ENCODE measurements at regions of chr2 and their contacts with region 1.

Region 1: DNA sequence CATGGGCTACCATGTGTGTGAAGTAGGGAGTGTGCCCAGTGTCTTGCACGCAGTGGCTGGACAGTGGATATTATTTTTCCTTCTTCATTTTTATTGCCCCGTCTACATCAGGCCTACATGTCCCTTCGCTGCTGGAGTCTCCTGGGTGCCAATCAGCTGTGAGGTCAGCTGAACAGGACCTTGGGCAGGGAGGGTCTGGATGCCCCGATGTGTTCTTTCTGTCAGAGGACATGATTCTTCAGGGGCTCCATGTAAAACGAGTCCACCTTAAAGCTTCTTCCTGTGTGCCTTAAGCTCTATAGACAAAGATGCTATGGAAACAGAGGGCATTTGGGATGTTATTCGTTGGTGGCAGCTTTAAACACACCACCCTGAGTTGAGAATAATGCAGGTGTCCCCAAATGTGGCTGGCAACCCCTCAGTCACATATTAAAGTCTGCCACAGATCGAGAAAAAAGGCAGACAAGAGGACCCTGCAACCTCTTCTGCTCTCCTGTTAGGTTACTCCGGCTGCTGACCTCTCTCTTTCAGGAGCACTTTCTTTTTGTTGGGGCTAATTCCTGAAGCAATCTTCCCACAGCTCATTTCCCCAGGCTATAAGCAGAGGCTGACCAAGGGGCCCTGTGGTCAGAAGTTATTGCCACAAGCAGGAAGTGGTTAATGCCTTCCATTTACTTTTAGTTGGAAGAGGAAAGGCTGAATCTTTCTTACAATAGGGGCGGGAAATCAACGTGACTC is 20.0 kb downstream of the GREB1 start:
- DNase-seq: peak; percentile 44
- H3K4me3 ChIP-seq: no peak overlapping the region
- H3K27ac ChIP-seq: no peak overlapping the region
- H3K4me1 ChIP-seq: no peaks in the 10 kb centered on the region
- H3K27me3 ChIP-seq: peaks cover 6% of the 10 kb centered on the region
- CTCF ChIP-seq: no peak

Region 2: DNA sequence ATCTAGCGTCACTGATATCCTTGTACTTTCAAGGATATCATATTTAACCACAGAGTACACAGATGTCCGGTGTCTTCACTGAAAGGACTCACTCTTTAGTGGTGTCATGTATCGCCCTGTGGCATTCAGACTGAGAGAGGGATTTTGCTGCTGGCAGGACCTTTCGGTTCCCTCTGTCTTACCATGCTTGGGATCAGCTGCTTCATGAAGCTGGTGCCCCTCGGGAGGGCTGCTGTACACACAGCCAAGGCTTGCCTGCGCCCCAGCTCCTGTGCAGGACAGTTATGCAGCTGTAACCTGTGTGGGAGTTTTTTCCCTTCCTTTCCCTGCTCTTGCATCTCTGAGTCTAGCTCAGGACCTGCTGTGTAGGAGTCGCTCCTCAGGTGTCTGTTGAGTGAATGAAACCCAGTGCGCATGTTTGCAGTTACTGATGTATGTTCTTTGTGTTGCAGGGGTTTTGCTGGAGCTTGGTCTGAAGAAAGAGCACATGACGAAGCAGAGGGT is 44.5 kb after region 1 on chr2:
- CTCF ChIA-PET with region 1: no interaction called
- dilution Hi-C with region 1: loop called (anchors 5 kb)
- in situ Hi-C with region 1: no loop called
- intact Hi-C with region 1: no loop called
- DNase-seq: no peak
- H3K4me3 ChIP-seq: no peak overlapping the region
- H3K27ac ChIP-seq: no peak overlapping the region
- H3K4me1 ChIP-seq: no peaks in the 10 kb centered on the region
- H3K27me3 ChIP-seq: peaks cover 5% of the 10 kb centered on the region
- CTCF ChIP-seq: no peak

Region 3: DNA sequence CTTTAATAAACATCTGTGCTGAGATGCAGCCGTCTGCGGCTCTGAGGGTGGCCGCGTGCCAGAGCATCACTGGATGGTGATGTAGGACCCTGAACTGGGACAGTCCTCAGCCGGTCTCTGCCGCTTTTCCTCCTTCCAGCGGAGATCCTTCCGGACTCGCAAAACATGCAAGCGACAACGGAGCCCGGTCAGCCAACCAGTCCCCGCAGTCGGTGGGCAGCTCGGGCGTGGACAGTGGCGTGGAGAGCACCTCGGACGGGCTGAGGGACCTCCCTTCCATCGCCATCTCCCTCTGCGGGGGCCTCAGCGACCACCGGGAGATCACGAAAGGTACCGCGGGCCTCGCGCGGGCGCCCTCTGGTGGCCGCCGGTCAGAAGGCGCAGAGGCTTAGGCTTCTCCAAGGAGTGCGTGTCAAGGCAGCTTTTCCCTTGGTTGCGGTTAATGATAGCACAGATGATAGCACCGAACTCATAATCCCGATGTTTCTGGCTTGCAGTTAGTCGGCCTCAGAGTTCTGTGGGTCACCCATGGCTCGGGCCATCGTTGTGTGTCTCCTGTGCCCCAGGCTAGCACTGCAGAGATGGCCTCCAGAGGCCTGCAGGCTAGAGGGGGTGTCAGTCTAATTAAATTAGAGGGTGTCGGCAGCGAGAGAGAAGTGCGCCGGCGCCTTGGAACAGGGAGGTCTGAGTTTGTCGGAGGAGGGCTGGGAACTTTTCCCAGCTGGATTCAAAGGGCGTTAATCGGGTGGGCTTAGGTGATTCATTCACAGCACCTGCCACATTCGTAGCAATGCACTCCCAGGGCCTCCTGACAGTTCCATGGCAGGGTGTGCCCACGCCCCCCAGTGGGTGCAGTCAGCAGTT is 231.1 kb after region 1 on chr2:
- CTCF ChIA-PET with region 1: no interaction called
- dilution Hi-C with region 1: no loop called
- in situ Hi-C with region 1: no loop called
- intact Hi-C with region 1: no loop called
- DNase-seq: peak; percentile 23
- H3K4me3 ChIP-seq: no peak overlapping the region
- H3K27ac ChIP-seq: no peak overlapping the region
- H3K4me1 ChIP-seq: no peaks in the 10 kb centered on the region
- H3K27me3 ChIP-seq: no peaks in the 10 kb centered on the region
- CTCF ChIP-seq: peak; percentile 70 to 80